Common myeloid progenitor, CD34-positive (primary cell): ENCODE measurements at regions of chr19 and their contacts with region 1.

Region 1: DNA sequence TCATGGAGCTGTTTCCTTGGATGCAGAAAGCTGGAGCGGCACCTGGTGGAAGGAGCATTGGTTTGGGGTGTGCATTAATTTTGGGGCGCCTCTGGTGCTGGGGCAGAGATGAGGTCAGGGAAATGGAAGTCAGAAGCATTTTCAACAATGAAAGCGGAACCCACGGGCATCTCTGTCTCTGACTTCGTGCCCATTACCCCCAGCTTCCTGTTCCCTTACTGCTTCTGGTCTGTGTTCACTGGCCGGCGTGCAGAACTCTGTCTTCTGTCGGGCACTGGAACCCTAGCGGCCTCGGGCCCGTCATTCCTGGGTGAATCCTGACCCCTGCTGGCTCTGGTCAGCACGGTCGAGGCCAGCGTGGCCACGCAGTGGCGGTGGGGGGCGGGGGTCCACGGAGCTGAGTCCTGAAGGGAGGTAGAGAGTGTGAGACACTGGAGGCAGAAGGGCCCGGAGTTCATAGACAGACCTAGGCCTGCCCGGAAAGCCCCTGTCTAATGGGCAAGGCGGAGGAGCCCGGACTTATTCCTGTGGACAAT is 7.9 kb upstream of the LINGO3 start:
- DNase-seq: peak; percentile 57 to 73 (median 71)
- H3K4me3 ChIP-seq: peak overlapping the region in 1 of 7 experiments; percentile 17
- H3K27ac ChIP-seq: no peak overlapping the region
- H3K4me1 ChIP-seq: peaks cover 0 to 32% (median 18%) of the 10 kb centered on the region in 4 experiments
- H3K27me3 ChIP-seq: peaks cover 0 to 12% (median 1%) of the 10 kb centered on the region in 5 experiments

Region 2: DNA sequence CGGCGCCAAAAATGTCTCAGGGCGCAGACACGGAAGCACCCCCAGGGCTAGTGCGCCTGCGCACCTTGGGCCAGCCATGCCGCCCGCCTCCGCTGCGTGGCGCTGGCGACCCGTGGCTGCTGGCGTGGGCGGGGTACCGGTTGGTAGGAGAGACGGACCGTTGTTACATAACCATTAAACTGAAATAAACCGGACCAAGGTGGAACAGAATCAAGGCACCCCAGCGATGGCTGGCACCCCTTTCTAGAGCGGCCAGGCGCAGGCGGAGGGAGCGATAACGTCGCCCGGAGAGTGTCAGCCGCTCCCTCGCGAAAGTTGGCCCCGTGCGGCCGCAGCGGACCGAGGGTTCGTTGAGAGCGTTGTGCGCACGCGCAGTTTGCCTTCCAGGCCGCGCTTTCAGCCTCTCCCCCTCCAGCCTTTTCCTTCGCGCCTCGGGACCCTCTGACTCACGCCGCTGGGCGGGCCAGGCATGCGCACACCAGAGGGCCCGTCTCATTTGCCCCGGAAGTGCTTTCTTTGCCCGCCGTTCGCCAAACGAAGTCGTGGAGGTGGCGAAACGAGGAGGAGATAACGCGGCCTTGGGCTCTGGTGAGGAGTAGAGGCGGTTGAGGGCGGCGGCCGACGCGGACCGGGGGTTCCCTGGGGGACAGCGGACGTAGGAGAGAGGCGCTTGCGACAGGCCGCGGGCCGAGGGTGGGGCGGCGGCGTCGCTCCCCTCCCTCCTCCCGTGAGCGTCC is 79.4 kb before region 1 on chr19 and contains the starts of genes PLEKHJ1 and SF3A2:
- CTCF ChIA-PET with region 1: interaction called, 11 read pairs
- POLR2A ChIA-PET with region 1: no interaction called
- DNase-seq: peak; percentile 97 to 99 (median 98)
- H3K4me3 ChIP-seq: peak within 1 kb of the TSS; percentile 59 to 86 (median 79)
- H3K27ac ChIP-seq: peak within 1 kb of the TSS; percentile 85 to 94
- H3K4me1 ChIP-seq: peaks cover 0 to 64% (median 62%) of the 10 kb centered on the region in 4 experiments
- H3K27me3 ChIP-seq: no peaks in the 10 kb centered on the region

Region 3: DNA sequence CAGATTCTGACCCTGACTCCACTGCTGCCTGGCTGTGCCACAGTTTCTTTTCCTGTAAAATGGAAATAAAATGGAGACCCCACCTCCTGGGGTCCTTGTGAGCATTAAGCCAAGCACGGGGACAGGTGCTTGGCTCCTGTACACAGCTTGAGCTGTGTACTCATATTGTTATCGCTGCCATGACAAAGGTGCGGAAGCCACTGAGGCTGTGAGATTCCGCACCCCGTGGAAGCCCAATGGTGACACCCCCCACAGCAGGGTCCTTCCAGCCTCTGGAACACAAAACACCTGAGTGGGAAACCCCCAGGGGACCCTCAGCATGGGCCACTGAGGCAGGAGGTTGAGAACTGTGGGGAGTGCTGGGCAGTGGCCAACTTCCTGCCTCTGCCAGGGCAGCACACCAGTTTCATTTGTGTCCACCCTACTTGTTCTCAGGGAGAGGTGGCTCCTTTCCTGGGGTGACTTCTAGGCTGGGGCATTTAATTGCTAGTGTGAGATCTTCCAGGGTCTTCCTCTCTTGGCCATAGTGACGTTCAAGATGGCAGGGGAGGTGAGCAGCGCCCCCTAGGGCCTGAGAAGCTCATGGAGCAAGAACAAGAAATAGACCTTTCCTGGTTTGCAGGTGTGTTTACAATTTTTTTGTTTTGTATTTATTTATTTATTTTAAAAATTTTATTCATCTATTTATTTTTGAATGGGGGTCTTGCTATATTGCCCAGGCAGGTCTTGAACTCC is 54.3 kb before region 1 on chr19:
- CTCF ChIA-PET with region 1: no interaction called
- POLR2A ChIA-PET with region 1: no interaction called
- DNase-seq: peak; percentile 44 to 65 (median 63)
- H3K4me3 ChIP-seq: no peak overlapping the region
- H3K27ac ChIP-seq: no peak overlapping the region
- H3K4me1 ChIP-seq: peaks cover 0 to 44% (median 35%) of the 10 kb centered on the region in 4 experiments
- H3K27me3 ChIP-seq: no peaks in the 10 kb centered on the region

Region 4: GRCh38 chr19:2273356-2274184 is 42.3 kb before region 1 on chr19:
- CTCF ChIA-PET with region 1: interaction called, 33 read pairs
- POLR2A ChIA-PET with region 1: no interaction called
- DNase-seq: peak; percentile 77 to 82 (median 78)
- H3K4me3 ChIP-seq: peak overlapping the region in 4 of 7 experiments; percentile 28 to 54 (median 44)
- H3K27ac ChIP-seq: peak overlapping the region in 1 of 2 experiments; percentile 58
- H3K4me1 ChIP-seq: peaks cover 5 to 44% (median 40%) of the 10 kb centered on the region in 4 experiments
- H3K27me3 ChIP-seq: no peaks in the 10 kb centered on the region

Region 5: GRCh38 chr19:2289714-2290435 is 26.0 kb before region 1 on chr19:
- CTCF ChIA-PET with region 1: interaction called, 10 read pairs
- POLR2A ChIA-PET with region 1: interaction called, 3 read pairs
- DNase-seq: peak; percentile 87 to 96 (median 95)
- H3K4me3 ChIP-seq: peak overlapping the region; percentile 44 to 85 (median 74)
- H3K27ac ChIP-seq: peak overlapping the region; percentile 50 to 81
- H3K4me1 ChIP-seq: peaks cover 0 to 76% (median 72%) of the 10 kb centered on the region in 4 experiments
- H3K27me3 ChIP-seq: no peaks in the 10 kb centered on the region

Region 6: DNA sequence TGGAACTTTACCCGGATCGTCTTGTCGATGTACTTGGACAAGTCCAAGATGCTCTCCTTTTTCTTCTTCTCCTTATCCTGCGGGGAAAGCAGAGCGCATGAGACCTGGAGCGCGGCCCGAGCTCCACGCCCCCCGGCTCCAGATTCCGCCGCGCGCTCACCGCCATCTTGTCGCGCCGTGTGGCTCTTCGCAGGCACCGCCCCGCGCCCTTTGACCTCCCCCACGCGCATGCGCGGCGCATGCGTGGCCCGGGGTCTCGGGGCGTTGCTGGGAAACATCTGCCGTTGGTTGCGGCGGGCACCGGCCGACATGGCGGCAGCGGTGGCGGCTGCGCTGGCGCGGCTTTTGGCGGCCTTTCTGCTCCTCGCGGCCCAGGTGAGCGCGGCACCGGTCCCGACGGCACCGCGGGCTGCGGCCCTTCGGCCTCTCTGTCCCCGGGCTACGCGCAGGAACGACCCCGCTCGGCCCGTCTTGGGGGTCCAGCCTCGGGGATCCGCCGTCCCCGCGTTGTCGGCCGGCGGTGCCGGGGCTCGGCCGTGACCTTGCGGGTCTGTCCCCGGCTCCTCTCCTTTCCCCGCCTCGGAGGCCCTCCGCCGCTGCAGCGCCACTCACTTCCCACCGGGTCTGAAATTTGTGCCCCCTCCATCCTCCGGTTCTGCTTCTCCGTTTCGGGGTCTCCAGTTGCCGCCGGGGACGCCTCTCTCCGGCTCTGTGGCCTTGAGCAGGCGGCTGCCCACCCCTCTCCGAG is 12.7 kb after region 1 on chr19 and contains the starts of genes LSM7 and SPPL2B:
- CTCF ChIA-PET with region 1: interaction called, 14 read pairs
- POLR2A ChIA-PET with region 1: interaction called, 23 read pairs
- DNase-seq: peak; percentile 89 to 96 (median 94)
- H3K4me3 ChIP-seq: peak within 1 kb of the TSS; percentile 70 to 98 (median 93)
- H3K27ac ChIP-seq: peak within 1 kb of the TSS; percentile 88 to 96
- H3K4me1 ChIP-seq: peaks cover 2 to 85% (median 81%) of the 10 kb centered on the region in 4 experiments
- H3K27me3 ChIP-seq: no peaks in the 10 kb centered on the region

Region 7: DNA sequence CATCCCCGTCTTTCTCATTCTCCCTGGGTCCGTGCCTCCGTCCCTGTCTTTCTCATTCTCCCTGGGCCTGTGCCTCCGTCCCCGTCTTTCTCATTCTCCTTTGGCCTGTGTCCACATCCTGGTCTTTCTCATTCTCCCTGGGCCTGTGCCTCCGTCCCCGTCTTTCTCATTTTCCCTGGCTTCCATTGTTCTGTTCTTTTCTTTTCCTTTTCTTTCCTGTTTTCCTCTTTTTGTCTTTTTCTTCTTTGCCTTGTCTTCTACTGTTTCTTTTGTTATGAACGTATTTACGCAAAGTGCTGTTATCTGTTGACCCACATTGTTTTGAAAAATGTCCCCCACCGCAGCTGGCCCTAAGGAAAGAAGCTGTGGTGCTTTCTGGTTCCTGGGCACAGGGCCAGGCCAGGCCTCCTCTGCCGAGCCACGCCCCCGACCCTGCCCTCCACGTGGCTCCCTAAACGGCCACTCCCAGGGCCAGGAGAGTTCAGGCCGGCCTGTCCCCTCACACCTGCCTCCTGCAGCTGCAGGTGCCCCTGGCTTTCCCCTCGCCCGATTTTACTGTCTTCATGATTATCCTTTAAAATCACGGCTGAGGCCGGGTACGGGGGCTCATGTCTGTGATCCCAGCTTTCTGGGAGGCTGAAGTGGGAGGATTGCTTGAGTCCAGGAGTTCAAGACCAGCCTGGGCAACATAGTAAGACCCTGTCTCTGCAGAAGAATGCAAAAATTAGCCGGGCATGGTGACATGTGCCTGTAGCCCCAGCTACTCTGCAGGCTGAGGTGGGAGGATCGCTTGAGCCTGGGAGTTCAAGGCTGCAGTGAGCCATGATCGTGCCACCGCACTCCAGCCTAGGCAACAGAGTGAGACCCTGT is 30.1 kb after region 1 on chr19:
- CTCF ChIA-PET with region 1: no interaction called
- POLR2A ChIA-PET with region 1: no interaction called
- DNase-seq: peak; percentile 76 to 90 (median 87)
- H3K4me3 ChIP-seq: peak overlapping the region in 1 of 7 experiments; percentile 10
- H3K27ac ChIP-seq: peak overlapping the region; percentile 40 to 84
- H3K4me1 ChIP-seq: peaks cover 0 to 50% (median 29%) of the 10 kb centered on the region in 4 experiments
- H3K27me3 ChIP-seq: no peaks in the 10 kb centered on the region

Region 8: GRCh38 chr19:2391118-2391725 is 75.3 kb after region 1 on chr19:
- CTCF ChIA-PET with region 1: interaction called, 11 read pairs
- POLR2A ChIA-PET with region 1: interaction called, 3 read pairs
- DNase-seq: peak; percentile 63 to 87 (median 84)
- H3K4me3 ChIP-seq: no peak overlapping the region
- H3K27ac ChIP-seq: no peak overlapping the region
- H3K4me1 ChIP-seq: peaks cover 0 to 20% (median 14%) of the 10 kb centered on the region in 4 experiments
- H3K27me3 ChIP-seq: no peaks in the 10 kb centered on the region

Region 9: GRCh38 chr19:2494444-2495129 is 178.7 kb after region 1 on chr19:
- CTCF ChIA-PET with region 1: no interaction called
- POLR2A ChIA-PET with region 1: no interaction called
- DNase-seq: peak in 2 of 3 donors; percentile 73 to 77
- H3K4me3 ChIP-seq: peak overlapping the region; percentile 53 to 87 (median 75)
- H3K27ac ChIP-seq: no peak overlapping the region
- H3K4me1 ChIP-seq: peaks cover 0 to 50% (median 50%) of the 10 kb centered on the region in 4 experiments
- H3K27me3 ChIP-seq: peaks cover 0 to 15% (median 4%) of the 10 kb centered on the region in 5 experiments

Region 10: GRCh38 chr19:2524838-2525723 is 209.2 kb after region 1 on chr19:
- CTCF ChIA-PET with region 1: no interaction called
- POLR2A ChIA-PET with region 1: no interaction called
- DNase-seq: no peak
- H3K4me3 ChIP-seq: no peak overlapping the region
- H3K27ac ChIP-seq: no peak overlapping the region
- H3K4me1 ChIP-seq: no peaks in the 10 kb centered on the region
- H3K27me3 ChIP-seq: no peaks in the 10 kb centered on the region